ENCODE measurements at regions of chr7 and their contacts with region 1.

Region 1: GRCh38 chr7:116236020-116236630 is 25.8 kb downstream of the TES start:
- DNase-seq: no peak
- ATAC-seq: peak; percentile 63

Region 2: GRCh38 chr7:116173051-116174028 is 62.8 kb before region 1 on chr7:
- intact Hi-C with region 1: loop called (anchors 5 kb)
- DNase-seq: no peak
- ATAC-seq: peak; percentile 71

Measured in Right ventricle myocardium superior (tissue), 1 donor.